ENCODE measurements at regions of chr3 and their contacts with region 1.

Region 1: DNA sequence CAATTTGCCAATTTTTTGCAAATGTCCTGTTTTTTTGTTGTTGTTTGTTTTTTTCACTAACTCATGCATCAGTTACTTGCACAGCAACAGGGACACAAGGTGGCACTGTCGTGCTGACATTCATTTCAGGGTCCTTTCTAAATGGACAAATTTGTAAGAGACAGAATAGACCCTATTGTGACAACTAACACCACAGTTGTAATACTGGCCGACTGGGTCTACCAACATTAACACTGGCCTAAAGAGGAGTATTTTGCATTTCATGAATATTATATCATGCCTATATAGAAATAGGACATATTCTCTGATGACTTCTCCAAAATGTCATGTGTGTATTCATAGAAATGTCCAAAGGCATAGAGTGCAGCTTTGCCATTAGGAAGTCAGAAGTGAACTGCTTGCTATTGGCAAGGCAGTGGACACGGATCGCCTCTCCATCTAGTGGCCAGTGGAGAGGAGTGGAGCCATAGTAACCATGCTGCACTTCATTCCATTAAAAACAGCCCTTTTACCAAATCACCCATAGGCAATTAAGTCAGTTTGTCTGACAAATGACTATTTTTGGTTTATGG is 54.8 kb downstream of the ZBTB20 start:
- DNase-seq: peak; percentile 47
- H3K4me3 ChIP-seq: peak overlapping the region in 1 of 2 experiments; percentile 20; a peak in 1 of 4 replicates
- H3K27ac ChIP-seq: peak overlapping the region in 1 of 2 experiments; percentile 39; a peak in 2 of 4 replicates
- H3K4me1 ChIP-seq: peaks cover 0 to 5% of the 10 kb centered on the region in 2 experiments; a peak in 2 of 4 replicates
- H3K27me3 ChIP-seq: no peaks in the 10 kb centered on the region
- CTCF ChIP-seq: peak; percentile 81
- EP300 ChIP-seq: no peak
- RAD21 ChIP-seq: peak; percentile 77

Region 2: GRCh38 chr3:114383875-114384557 is 708.3 kb before region 1 on chr3:
- CTCF ChIA-PET with region 1: interaction called, 12 read pairs
- POLR2A ChIA-PET with region 1: no interaction called
- DNase-seq: peak; percentile 61
- H3K4me3 ChIP-seq: no peak overlapping the region; a peak in 1 of 4 replicates
- H3K27ac ChIP-seq: peak overlapping the region; percentile 8 to 37; a peak in 1 of 4 replicates
- H3K4me1 ChIP-seq: peaks cover 7 to 16% of the 10 kb centered on the region in 2 experiments; a peak in 2 of 4 replicates
- H3K27me3 ChIP-seq: no peaks in the 10 kb centered on the region
- CTCF ChIP-seq: peak; percentile 96
- EP300 ChIP-seq: no peak
- RAD21 ChIP-seq: peak; percentile 97

Region 3: GRCh38 chr3:114834170-114834940 is 258.0 kb before region 1 on chr3:
- CTCF ChIA-PET with region 1: interaction called, 35 read pairs
- POLR2A ChIA-PET with region 1: no interaction called
- DNase-seq: peak; percentile 29
- H3K4me3 ChIP-seq: no peak overlapping the region
- H3K27ac ChIP-seq: peak overlapping the region in 1 of 2 experiments; percentile 82; a peak in 2 of 4 replicates
- H3K4me1 ChIP-seq: peaks cover 0 to 9% of the 10 kb centered on the region in 2 experiments; a peak in 2 of 4 replicates
- H3K27me3 ChIP-seq: no peaks in the 10 kb centered on the region
- CTCF ChIP-seq: no peak
- EP300 ChIP-seq: peak in 1 of 2 experiments; percentile 89; a peak in 2 of 4 replicates
- RAD21 ChIP-seq: no peak

Region 4: GRCh38 chr3:115147329-115148141 is 55.2 kb after region 1 on chr3:
- CTCF ChIA-PET with region 1: interaction called, 15 read pairs
- POLR2A ChIA-PET with region 1: no interaction called
- DNase-seq: peak; percentile 91
- H3K4me3 ChIP-seq: peak overlapping the region; percentile 69 to 85
- H3K27ac ChIP-seq: peak overlapping the region; percentile 95 to 96
- H3K4me1 ChIP-seq: peaks cover 8 to 11% of the 10 kb centered on the region in 2 experiments; a peak in 2 of 4 replicates
- H3K27me3 ChIP-seq: no peaks in the 10 kb centered on the region
- CTCF ChIP-seq: no peak
- EP300 ChIP-seq: peak; percentile 5 to 14; a peak in 1 of 4 replicates
- RAD21 ChIP-seq: no peak

Region 5: DNA sequence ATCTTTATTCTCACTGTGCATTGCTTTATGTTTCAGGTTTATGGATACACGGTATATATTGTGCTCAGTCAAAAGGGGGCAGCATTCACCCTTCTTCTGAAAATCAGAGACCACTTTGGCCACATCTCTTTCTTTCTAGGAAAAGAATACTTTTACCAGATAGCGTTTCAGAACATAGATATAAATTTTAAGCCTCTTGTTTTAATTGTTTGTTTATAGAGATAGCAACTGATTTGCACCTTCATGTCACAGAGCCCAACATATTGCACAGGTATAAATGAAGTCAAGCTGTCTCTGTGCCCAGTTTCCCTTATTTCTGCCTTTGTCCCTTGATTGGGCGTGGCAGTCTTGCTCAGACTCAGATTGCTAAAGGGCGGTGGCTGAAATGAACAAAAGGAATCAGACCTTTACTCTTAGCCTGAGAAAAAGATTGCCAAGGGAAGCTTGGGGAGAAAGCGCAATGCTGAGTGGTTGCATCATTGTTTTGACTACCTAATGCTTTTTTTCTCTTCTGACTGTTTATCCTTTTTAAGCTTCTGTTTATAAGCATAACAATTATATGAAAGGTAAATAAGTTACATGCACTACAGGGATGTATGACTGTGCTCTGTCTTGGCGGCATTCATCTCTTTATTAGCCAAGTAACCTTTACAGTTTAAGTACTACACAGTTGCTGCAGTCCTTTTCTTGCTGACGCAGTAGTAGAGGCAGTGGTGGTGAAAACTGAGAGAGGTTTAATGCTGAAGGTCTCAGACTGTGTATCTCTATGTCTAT is 125.6 kb after region 1 on chr3:
- CTCF ChIA-PET with region 1: interaction called, 17 read pairs
- POLR2A ChIA-PET with region 1: no interaction called
- DNase-seq: peak; percentile 35
- H3K4me3 ChIP-seq: peak overlapping the region in 1 of 2 experiments; percentile 20; a peak in 1 of 4 replicates
- H3K27ac ChIP-seq: peak overlapping the region; percentile 22 to 53; a peak in 3 of 4 replicates
- H3K4me1 ChIP-seq: peaks cover 3 to 15% of the 10 kb centered on the region in 2 experiments; a peak in 3 of 4 replicates
- H3K27me3 ChIP-seq: no peaks in the 10 kb centered on the region
- CTCF ChIP-seq: peak; percentile 89
- EP300 ChIP-seq: no peak; a peak in 1 of 4 replicates
- RAD21 ChIP-seq: peak; percentile 98

Region 6: DNA sequence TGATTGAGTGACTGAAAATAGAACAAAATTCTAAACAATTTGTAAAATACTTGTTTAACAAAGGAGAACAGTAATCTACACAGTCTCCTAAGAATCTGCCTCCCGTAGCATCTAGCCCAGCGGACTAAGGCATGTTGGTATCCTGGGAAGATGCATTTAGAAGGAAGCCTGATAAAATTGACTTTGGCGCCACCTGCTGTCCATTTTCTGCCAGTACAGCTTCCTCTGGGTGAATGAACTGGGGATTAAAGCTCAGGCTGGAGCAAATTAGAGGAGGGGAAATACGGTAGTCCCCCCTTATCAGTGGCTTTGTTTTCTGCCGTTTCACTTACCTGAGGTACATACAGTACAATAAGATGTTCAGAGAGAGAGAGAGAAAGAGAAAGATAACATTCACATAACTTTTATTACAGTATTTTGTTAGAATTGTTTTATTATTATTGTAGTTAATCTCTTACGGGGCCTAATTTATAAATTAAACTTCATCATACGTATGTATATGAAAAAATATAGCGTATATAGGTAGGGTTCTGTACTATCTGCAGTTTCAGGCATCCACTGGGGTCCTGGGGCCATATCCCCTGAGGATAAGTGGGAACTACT is 722.6 kb after region 1 on chr3:
- CTCF ChIA-PET with region 1: interaction called, 11 read pairs
- POLR2A ChIA-PET with region 1: no interaction called
- DNase-seq: peak; percentile 68
- H3K4me3 ChIP-seq: no peak overlapping the region; a peak in 1 of 4 replicates
- H3K27ac ChIP-seq: no peak overlapping the region
- H3K4me1 ChIP-seq: no peaks in the 10 kb centered on the region
- H3K27me3 ChIP-seq: no peaks in the 10 kb centered on the region
- CTCF ChIP-seq: peak; percentile 95
- EP300 ChIP-seq: no peak
- RAD21 ChIP-seq: peak; percentile 91

Measured in SK-N-SH (cell line).